ENCODE measurements at regions of chr9 and their contacts with region 1.

Region 1: GRCh38 chr9:136093995-136094881 is 851 bp downstream of the NACC2 start:
- DNase-seq: peak in 8 of 9 experiments; percentile 43 to 74 (median 62)
- ATAC-seq: peak; percentile 77
- H3K4me3 ChIP-seq: peak overlapping the region; percentile 57 to 67
- H3K4me3 Mint-ChIP-seq: peak overlapping the region; percentile 74
- H3K27ac ChIP-seq: peak overlapping the region; percentile 33 to 68
- H3K27ac Mint-ChIP-seq: no peak overlapping the region
- H3K4me1 ChIP-seq: peaks cover 33% of the 10 kb centered on the region
- H3K4me1 Mint-ChIP-seq: peaks cover 35% of the 10 kb centered on the region
- H3K27me3 ChIP-seq: no peaks in the 10 kb centered on the region
- H3K27me3 Mint-ChIP-seq: no peaks in the 10 kb centered on the region
- CTCF ChIP-seq: no peak

Region 2: GRCh38 chr9:135997090-135998015 is 96.9 kb before region 1 on chr9:
- CTCF ChIA-PET with region 1: no interaction called
- POLR2A ChIA-PET with region 1: no interaction called
- intact Hi-C with region 1: no loop called
- DNase-seq: no peak
- ATAC-seq: no peak
- H3K4me3 ChIP-seq: no peak overlapping the region
- H3K4me3 Mint-ChIP-seq: no peak overlapping the region
- H3K27ac ChIP-seq: no peak overlapping the region
- H3K27ac Mint-ChIP-seq: no peak overlapping the region
- H3K4me1 ChIP-seq: peaks cover 9% of the 10 kb centered on the region
- H3K4me1 Mint-ChIP-seq: no peaks in the 10 kb centered on the region
- H3K27me3 ChIP-seq: no peaks in the 10 kb centered on the region
- H3K27me3 Mint-ChIP-seq: no peaks in the 10 kb centered on the region
- CTCF ChIP-seq: no peak

Region 3: DNA sequence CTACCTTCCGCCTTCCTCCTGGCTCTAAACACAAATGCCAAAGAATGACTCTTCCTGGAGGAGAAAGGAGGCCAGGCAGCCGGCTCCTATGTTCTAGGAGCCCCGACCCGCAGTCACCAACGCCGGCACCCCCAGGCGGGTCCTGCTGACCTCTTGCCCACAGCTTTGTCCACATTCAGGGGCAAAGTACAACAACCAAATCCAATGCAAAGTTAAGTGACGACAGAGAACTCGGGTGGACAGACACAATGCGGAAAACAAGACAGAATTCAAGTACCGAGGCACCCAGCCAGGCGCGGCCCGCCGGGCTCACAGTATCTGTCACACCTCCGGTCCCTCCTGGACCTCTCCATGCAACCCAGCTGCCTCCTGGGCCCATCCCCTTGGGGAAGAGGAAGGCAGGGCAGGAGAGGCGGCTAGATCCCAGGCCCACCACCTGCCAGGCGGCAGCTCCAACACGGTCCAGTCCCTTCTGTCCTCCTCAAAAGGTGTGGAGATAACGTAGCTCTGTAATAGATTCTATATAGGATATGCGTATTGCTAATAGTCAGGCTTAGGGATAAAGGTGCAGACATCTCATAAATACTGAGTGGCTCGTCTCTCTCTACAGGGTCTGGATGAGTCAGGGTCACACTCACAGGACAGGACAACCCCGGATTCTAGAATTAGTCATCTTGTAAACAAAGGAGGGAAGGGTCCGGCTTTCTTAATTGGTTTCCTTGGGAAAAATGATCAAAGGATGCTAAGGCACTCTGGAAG is 86.1 kb before region 1 on chr9:
- CTCF ChIA-PET with region 1: no interaction called
- POLR2A ChIA-PET with region 1: no interaction called
- intact Hi-C with region 1: no loop called
- DNase-seq: no peak
- ATAC-seq: no peak
- H3K4me3 ChIP-seq: no peak overlapping the region
- H3K4me3 Mint-ChIP-seq: no peak overlapping the region
- H3K27ac ChIP-seq: no peak overlapping the region
- H3K27ac Mint-ChIP-seq: no peak overlapping the region
- H3K4me1 ChIP-seq: no peaks in the 10 kb centered on the region
- H3K4me1 Mint-ChIP-seq: no peaks in the 10 kb centered on the region
- H3K27me3 ChIP-seq: no peaks in the 10 kb centered on the region
- H3K27me3 Mint-ChIP-seq: no peaks in the 10 kb centered on the region
- CTCF ChIP-seq: no peak

Region 4: GRCh38 chr9:136109351-136110081 is 15.3 kb after region 1 on chr9:
- CTCF ChIA-PET with region 1: interaction called, 6 read pairs
- POLR2A ChIA-PET with region 1: interaction called, 39 read pairs
- intact Hi-C with region 1: loop called (anchors 1 kb)
- DNase-seq: peak; percentile 77 to 95 (median 92)
- ATAC-seq: peak; percentile 91
- H3K4me3 ChIP-seq: peak overlapping the region; percentile 58 to 65
- H3K4me3 Mint-ChIP-seq: peak overlapping the region; percentile 83
- H3K27ac ChIP-seq: peak overlapping the region; percentile 28 to 84
- H3K27ac Mint-ChIP-seq: peak overlapping the region; percentile 84
- H3K4me1 ChIP-seq: peaks cover 93% of the 10 kb centered on the region
- H3K4me1 Mint-ChIP-seq: peaks cover 73% of the 10 kb centered on the region
- H3K27me3 ChIP-seq: no peaks in the 10 kb centered on the region
- H3K27me3 Mint-ChIP-seq: no peaks in the 10 kb centered on the region
- CTCF ChIP-seq: no peak

Region 5: DNA sequence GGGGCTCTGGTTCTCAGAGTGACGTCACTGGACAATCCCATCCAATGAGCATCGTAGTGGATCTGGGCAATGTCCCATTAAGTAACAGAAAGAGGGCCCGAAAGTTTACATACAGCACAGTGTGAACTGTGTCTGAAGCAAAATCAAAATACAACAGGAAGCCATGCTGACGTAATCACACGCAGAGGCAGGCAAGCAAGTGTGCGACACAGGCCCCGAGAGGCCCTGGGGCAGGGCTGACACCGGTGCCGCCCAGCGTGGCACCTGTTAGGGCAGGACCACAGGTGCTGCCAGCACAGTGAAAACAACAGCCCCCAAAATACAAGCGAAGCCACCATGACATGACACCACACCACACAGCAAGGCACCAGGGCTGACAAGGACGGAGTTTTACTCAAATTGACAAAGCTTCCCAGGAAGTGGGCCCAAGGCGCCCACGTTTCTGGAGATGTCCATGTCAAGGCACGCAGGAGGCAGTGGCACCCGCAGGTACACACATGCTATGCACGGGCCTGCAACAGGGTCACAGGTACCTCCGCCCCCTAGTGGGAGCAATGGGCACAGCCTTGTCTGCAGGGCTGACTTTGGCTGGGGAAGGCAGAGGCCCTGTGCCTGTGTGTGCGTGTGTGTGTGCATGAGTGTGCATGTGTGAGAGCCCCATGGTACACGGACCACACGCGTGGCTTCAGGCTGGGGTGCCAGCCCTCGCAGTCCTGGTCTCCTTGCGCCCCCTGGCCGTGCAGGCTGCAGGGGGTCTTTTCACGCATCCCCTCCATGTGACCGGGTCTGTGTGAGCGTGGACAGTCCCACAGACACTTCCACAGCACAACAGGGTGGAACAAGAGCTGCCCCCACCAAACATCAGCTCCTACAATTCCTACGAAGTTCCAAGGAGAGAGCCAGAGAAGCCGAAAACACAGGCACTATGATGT is 131.8 kb after region 1 on chr9:
- CTCF ChIA-PET with region 1: no interaction called
- POLR2A ChIA-PET with region 1: no interaction called
- intact Hi-C with region 1: loop called in 1 of 2 experiments (anchors 5 kb)
- DNase-seq: peak; percentile 31 to 73 (median 60)
- ATAC-seq: peak; percentile 86
- H3K4me3 ChIP-seq: no peak overlapping the region
- H3K4me3 Mint-ChIP-seq: no peak overlapping the region
- H3K27ac ChIP-seq: peak overlapping the region in 1 of 2 experiments; percentile 41
- H3K27ac Mint-ChIP-seq: peak overlapping the region; percentile 69
- H3K4me1 ChIP-seq: no peaks in the 10 kb centered on the region
- H3K4me1 Mint-ChIP-seq: peaks cover 9% of the 10 kb centered on the region
- H3K27me3 ChIP-seq: no peaks in the 10 kb centered on the region
- H3K27me3 Mint-ChIP-seq: no peaks in the 10 kb centered on the region
- CTCF ChIP-seq: peak; percentile 75